ENCODE measurements at regions of chr15 and their contacts with region 1.

Region 1: DNA sequence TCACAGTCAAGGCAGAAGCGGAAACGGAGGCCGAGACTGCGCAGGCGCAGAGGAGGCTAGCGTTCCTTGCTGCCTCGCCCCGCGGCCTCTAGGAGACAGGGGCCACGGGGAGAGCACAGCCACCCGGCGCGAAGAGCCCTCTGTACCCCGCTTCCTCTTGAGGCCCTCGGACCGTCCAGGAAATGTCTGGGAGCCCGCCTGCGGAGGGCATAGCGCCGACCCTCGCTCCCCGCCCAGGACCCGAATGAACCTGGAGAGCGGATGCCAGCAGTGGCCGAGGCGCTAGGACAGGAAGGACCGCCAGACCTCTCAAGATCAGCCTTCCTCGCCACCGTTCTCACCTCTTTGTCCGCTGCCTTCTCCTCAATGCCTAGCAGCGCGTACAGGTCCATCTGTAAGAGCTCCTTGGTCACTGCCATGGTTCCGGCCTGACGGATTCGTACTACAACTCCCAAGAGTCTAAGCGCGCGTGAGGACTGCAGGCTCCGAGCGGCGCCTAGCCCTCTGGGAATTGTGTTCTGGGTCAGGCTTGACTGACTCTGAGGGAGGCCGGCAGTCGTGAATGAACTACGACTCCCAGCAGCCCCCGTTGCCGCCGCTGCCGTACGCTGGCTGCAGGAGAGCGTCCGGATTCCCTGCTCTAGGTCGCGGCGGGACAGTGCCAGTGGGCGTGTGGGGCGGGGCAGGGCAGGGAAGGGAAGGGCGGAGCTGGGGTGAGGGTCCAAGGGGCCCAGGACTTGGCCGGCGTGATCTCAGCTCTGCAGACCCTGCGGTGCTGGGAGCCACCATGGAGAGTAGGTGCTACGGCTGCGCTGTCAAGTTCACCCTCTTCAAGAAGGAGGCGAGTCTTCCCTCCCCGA is at the starts of genes DNAJC17 and ZFYVE19:
- DNase-seq: peak; percentile 97 to 99 (median 98)
- ATAC-seq: peak; percentile 99
- H3K4me3 ChIP-seq: peak within 1 kb of the TSS; percentile 71 to 98 (median 87)
- H3K27ac ChIP-seq: peak within 1 kb of the TSS; percentile 87 to 98 (median 96)
- H3K4me1 ChIP-seq: peaks cover 0 to 40% (median 18%) of the 10 kb centered on the region in 12 donors
- H3K27me3 ChIP-seq: no peaks in the 10 kb centered on the region
- CTCF ChIP-seq: peak in 3 of 12 donors; percentile 7 to 19 (median 10)
- POLR2A ChIP-seq: peak in 1 of 2 donors; percentile 66
- total RNA-seq, gene DNAJC17: 7.6 to 19.7 (median 14.7) TPM
- total RNA-seq, gene ZFYVE19: 11.9 to 27.1 (median 18.8) TPM

Region 2: GRCh38 chr15:40754883-40755811 is 52.1 kb before region 1 on chr15 and contains the start of gene RMDN3:
- intact Hi-C with region 1: loop called in 4 of 10 experiments (anchors 2 to 5 kb)
- DNase-seq: peak; percentile 93 to 97 (median 94)
- ATAC-seq: peak; percentile 94 to 100 (median 98)
- H3K4me3 ChIP-seq: peak within 1 kb of the TSS; percentile 70 to 98 (median 86)
- H3K27ac ChIP-seq: peak within 1 kb of the TSS in 11 of 12 donors; percentile 51 to 85 (median 80)
- H3K4me1 ChIP-seq: peaks cover 0 to 24% (median 12%) of the 10 kb centered on the region in 12 donors
- H3K27me3 ChIP-seq: no peaks in the 10 kb centered on the region
- CTCF ChIP-seq: peak in 3 of 12 donors; percentile 20 to 33 (median 29)
- POLR2A ChIP-seq: peak in 1 of 2 donors; percentile 76
- total RNA-seq, gene RMDN3: 12.0 to 22.9 (median 18.5) TPM

Region 3: DNA sequence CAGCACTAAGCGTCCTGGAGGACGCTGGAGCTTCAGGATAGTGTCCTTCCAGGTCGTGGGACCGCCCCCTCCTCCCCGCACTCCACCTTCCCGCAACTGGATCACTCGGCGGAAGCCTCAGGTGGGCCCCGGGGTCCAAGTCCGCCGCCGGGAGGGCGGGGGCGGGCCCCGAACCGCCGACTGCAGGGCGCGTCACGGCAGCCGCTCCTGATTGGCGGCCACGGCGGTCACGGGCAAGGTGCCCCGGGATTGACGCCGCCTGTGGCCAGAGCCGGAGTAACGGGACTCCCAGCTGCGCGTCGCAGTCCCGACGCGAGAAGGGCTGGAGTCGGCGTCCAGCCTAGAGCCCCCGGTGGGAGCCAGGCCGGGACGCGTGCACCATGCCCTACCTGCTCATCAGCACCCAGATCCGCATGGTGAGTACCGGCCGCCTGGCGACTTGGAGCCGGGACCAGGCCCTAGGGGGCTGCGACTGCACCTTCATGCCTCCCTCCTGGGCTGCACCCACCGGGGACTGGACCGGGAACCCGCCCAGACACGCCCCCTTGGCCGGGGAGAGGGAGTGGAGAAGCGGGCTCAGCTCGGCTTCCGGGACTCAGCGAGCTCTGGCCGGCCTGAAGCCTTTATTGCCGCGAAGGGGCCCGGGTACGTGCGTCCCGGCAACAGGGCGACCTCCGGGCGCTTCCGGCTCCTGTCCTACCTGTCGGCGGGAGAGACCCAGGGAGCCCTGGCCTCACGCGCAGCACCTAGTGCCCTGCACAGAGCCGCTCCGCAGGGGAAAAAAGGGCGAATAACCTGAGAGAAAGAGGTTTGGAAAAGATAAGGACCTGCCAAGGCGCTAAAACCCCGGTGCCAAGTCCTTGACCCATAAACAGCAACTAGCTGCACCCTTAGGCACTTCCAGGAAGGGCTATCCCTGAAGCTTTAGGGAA is 43.2 kb before region 1 on chr15 and contains the start of gene GCHFR:
- intact Hi-C with region 1: loop called in 4 of 10 experiments (anchors 5 kb)
- DNase-seq: peak; percentile 70 to 87 (median 74)
- ATAC-seq: peak; percentile 26 to 78 (median 74)
- H3K4me3 ChIP-seq: peak within 1 kb of the TSS; percentile 33 to 75 (median 58)
- H3K27ac ChIP-seq: peak within 1 kb of the TSS in 11 of 12 donors; percentile 47 to 80 (median 62)
- H3K4me1 ChIP-seq: peaks cover 0 to 46% (median 23%) of the 10 kb centered on the region in 12 donors
- H3K27me3 ChIP-seq: no peaks in the 10 kb centered on the region
- CTCF ChIP-seq: peak in 10 of 12 donors; percentile 8 to 55 (median 35)
- POLR2A ChIP-seq: peak in 1 of 2 donors; percentile 59
- total RNA-seq, gene GCHFR: 1.6 to 24.0 (median 6.6) TPM

Region 4: GRCh38 chr15:40769274-40770146 is 37.7 kb before region 1 on chr15 and contains the start of gene C15orf62:
- intact Hi-C with region 1: loop called in 3 of 10 experiments (anchors 5 kb)
- DNase-seq: no peak
- ATAC-seq: no peak
- H3K4me3 ChIP-seq: no peak within 1 kb of the TSS
- H3K27ac ChIP-seq: peak within 1 kb of the TSS in 2 of 12 donors; percentile 10 to 24
- H3K4me1 ChIP-seq: peaks cover 0 to 39% (median 6%) of the 10 kb centered on the region in 12 donors
- H3K27me3 ChIP-seq: no peaks in the 10 kb centered on the region
- CTCF ChIP-seq: no peak
- POLR2A ChIP-seq: no peak
- total RNA-seq, gene C15orf62: 0.12 to 1.1 (median 0.18) TPM in 6 of 9 donors, not detected in the others

Measured in heart left ventricle (tissue), 16 donors.